Endothelial cell of umbilical vein (primary cell): ENCODE measurements at regions of chr12 and their contacts with region 1.

Region 1: GRCh38 chr12:8662593-8662992 is at the start of gene MFAP5:
- DNase-seq: no peak
- H3K4me3 ChIP-seq: no peak within 1 kb of the TSS
- H3K27ac ChIP-seq: no peak within 1 kb of the TSS
- H3K4me1 ChIP-seq: no peaks in the 10 kb centered on the region
- H3K27me3 ChIP-seq: peaks cover 2 to 9% of the 10 kb centered on the region in 2 experiments
- CTCF ChIP-seq: no peak
- POLR2A ChIP-seq: no peak
- total RNA-seq, gene MFAP5: not detected in 2 replicates

Region 2: GRCh38 chr12:8078398-8078797 is 584.2 kb before region 1 on chr12:
- CTCF ChIA-PET with region 1: no interaction called
- POLR2A ChIA-PET with region 1: no interaction called
- dilution Hi-C with region 1: no loop called
- intact Hi-C with region 1: no loop called
- DNase-seq: peak; percentile 84
- H3K4me3 ChIP-seq: no peak overlapping the region
- H3K27ac ChIP-seq: no peak overlapping the region
- H3K4me1 ChIP-seq: peaks cover 22% of the 10 kb centered on the region
- H3K27me3 ChIP-seq: no peaks in the 10 kb centered on the region
- CTCF ChIP-seq: peak; percentile 28 to 49
- POLR2A ChIP-seq: no peak

Region 3: GRCh38 chr12:8609061-8609570 is 53.5 kb before region 1 on chr12:
- CTCF ChIA-PET with region 1: interaction called, 12 read pairs
- POLR2A ChIA-PET with region 1: no interaction called
- dilution Hi-C with region 1: no loop called
- intact Hi-C with region 1: no loop called
- DNase-seq: peak; percentile 67
- H3K4me3 ChIP-seq: no peak overlapping the region
- H3K27ac ChIP-seq: no peak overlapping the region
- H3K4me1 ChIP-seq: no peaks in the 10 kb centered on the region
- H3K27me3 ChIP-seq: peaks cover 4 to 9% of the 10 kb centered on the region in 2 experiments
- CTCF ChIP-seq: peak; percentile 58 to 75
- POLR2A ChIP-seq: no peak

Region 4: DNA sequence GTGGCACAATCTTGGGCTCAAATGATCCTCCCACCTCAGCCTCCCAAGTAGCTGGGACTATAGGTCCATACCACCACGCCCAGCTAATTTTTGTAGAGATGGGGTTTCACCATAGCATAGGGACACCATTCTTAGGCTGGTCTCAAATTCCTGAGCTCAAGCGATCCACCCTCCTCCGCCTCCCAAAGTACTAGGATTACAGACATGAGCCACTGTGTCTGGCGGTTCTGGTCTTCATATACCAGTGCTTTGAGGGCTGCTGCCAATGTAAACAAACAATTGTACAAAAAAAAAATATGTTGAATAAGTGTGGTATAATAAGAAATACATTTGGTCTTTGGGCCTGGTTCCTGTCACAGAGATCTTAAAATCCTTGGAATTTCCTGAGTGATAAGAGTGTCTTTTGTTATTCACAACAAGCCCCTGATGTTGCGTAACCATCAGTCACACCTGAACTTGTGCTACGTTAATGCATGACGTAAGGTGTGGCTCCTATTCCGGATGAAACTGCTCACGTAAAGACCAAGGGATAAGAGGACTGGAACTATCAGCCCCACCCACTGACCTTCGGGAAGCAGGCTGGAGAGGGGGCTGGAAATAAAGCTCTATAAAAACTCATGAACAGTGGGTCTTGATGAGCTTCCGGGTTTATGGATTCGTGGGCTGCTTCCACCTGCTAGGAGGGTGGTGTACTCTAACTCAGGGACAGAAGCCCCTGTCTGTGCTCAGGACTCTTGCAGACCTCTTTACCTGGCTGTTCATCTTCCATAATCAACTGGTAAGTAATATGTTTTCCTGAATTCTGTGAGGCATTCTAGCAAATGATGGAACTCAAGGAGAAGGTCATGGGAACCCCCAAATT is 18.7 kb after region 1 on chr12:
- CTCF ChIA-PET with region 1: interaction called, 73 read pairs
- POLR2A ChIA-PET with region 1: no interaction called
- dilution Hi-C with region 1: no loop called
- intact Hi-C with region 1: loop called (anchors 1 kb)
- DNase-seq: peak; percentile 91
- H3K4me3 ChIP-seq: peak overlapping the region in 2 of 3 experiments; percentile 3 to 53
- H3K27ac ChIP-seq: peak overlapping the region; percentile 63
- H3K4me1 ChIP-seq: peaks cover 27% of the 10 kb centered on the region
- H3K27me3 ChIP-seq: no peaks in the 10 kb centered on the region
- CTCF ChIP-seq: no peak
- POLR2A ChIP-seq: no peak

Region 5: GRCh38 chr12:8785499-8785898 is 122.9 kb after region 1 on chr12:
- CTCF ChIA-PET with region 1: no interaction called
- POLR2A ChIA-PET with region 1: no interaction called
- dilution Hi-C with region 1: no loop called
- intact Hi-C with region 1: no loop called
- DNase-seq: no peak
- H3K4me3 ChIP-seq: no peak overlapping the region
- H3K27ac ChIP-seq: no peak overlapping the region
- H3K4me1 ChIP-seq: no peaks in the 10 kb centered on the region
- H3K27me3 ChIP-seq: no peaks in the 10 kb centered on the region
- CTCF ChIP-seq: no peak
- POLR2A ChIP-seq: no peak

Region 6: GRCh38 chr12:8823565-8824300 is 161.1 kb after region 1 on chr12:
- CTCF ChIA-PET with region 1: interaction called, 122 read pairs
- POLR2A ChIA-PET with region 1: interaction called, 8 read pairs
- dilution Hi-C with region 1: no loop called
- intact Hi-C with region 1: loop called (anchors 1 kb)
- DNase-seq: peak; percentile 53
- H3K4me3 ChIP-seq: no peak overlapping the region
- H3K27ac ChIP-seq: no peak overlapping the region
- H3K4me1 ChIP-seq: no peaks in the 10 kb centered on the region
- H3K27me3 ChIP-seq: peaks cover 1 to 3% of the 10 kb centered on the region in 2 experiments
- CTCF ChIP-seq: peak; percentile 62 to 65
- POLR2A ChIP-seq: no peak

Region 7: DNA sequence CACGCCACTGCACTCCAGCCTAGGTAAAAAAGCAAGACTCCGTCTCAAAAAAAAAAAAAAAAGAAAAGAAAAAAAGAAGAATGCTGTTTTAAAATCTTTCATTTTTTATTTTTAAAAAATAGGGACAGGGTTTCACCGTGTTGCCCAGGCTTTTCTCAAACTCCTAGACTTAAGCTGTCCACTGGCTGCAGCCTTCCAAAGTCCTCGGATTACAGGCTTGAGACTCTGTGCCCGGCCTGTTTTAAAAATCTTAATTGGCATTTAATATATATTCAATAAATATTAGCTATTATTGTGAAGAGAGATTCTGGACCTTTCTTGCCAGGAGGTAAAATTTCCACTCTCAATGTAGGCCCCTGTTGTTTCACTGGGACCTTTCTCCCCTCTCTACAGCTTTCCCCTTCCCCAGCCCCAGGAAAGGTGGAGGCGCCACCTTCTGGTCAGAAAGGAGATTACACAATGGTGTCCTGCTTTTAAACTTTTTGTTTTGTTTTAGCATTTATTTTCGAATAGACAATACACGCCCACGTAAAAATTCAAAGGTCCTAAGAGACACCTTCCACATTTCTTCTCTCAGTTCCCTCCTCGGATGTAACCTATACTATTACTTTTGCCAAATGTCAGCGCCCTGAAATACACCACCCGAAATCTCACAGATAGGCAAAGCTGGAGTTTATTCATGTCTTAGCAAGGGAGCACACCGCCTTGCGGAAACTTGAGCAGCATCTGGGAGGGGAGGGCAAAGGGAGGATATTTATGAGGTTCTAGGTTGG is 227.9 kb after region 1 on chr12:
- CTCF ChIA-PET with region 1: interaction called, 311 read pairs
- POLR2A ChIA-PET with region 1: no interaction called
- dilution Hi-C with region 1: no loop called
- intact Hi-C with region 1: loop called (anchors 1 kb)
- DNase-seq: peak; percentile 77
- H3K4me3 ChIP-seq: peak overlapping the region; percentile 42 to 93 (median 63)
- H3K27ac ChIP-seq: no peak overlapping the region
- H3K4me1 ChIP-seq: no peaks in the 10 kb centered on the region
- H3K27me3 ChIP-seq: peaks cover 2% of the 10 kb centered on the region in 2 experiments
- CTCF ChIP-seq: peak; percentile 76 to 83
- POLR2A ChIP-seq: no peak

Region 8: GRCh38 chr12:9049520-9050133 is 387.0 kb after region 1 on chr12:
- CTCF ChIA-PET with region 1: interaction called, 104 read pairs
- POLR2A ChIA-PET with region 1: interaction called, 5 read pairs
- dilution Hi-C with region 1: no loop called
- intact Hi-C with region 1: loop called (anchors 2 kb)
- DNase-seq: peak; percentile 62
- H3K4me3 ChIP-seq: no peak overlapping the region
- H3K27ac ChIP-seq: no peak overlapping the region
- H3K4me1 ChIP-seq: no peaks in the 10 kb centered on the region
- H3K27me3 ChIP-seq: peaks cover 5 to 13% of the 10 kb centered on the region in 2 experiments
- CTCF ChIP-seq: peak; percentile 13 to 27
- POLR2A ChIP-seq: no peak